ENCODE measurements at regions of chr3 and their contacts with region 1.

Region 1: GRCh38 chr3:42638339-42638842 is 15.1 kb upstream of the ZBTB47 start:
- DNase-seq: peak; percentile 66
- H3K4me3 Mint-ChIP-seq: no peak overlapping the region
- H3K27ac Mint-ChIP-seq: no peak overlapping the region
- H3K4me1 Mint-ChIP-seq: peaks cover 19% of the 10 kb centered on the region
- H3K27me3 Mint-ChIP-seq: no peaks in the 10 kb centered on the region

Region 2: DNA sequence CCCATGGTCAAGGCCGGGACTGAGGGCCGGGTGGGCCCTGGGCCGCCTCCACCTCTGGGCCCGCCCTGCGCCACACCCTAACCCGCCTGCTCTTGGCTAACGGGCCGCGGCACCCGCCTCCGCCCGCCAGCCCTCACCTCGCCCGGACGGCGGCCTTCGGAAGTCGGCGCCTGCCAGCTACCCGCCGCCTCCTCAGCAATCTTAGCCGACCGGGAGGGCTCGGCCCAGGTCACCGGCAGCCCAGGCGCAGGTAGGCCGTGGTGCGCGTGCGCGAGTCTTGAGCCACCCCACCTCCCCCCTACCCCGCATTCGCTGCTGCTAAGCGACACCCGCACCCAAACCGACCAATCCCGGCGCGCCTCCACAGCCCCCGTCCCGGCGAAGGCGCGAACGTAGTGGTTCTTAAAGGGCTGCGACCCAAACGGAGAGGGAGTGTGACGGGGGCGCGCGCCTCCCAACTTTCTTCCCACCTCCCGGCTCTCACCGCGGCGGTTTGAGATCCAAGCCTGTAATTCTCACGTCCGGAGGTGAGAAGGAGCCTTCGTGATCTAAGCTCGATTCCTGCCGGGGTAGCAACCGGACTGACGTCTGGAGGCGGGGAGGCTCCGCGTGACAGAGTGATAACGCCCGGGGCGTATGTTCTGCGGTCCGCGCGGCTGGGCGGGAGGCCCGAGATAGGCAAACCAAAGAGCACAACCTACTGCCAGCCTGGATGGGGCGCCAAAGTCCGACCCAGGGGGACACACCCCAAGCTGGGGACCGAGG is 56.5 kb before region 1 on chr3 and contains the start of gene SEC22C:
- CTCF ChIA-PET with region 1: interaction called, 17 read pairs
- POLR2A ChIA-PET with region 1: interaction called, 16 read pairs
- DNase-seq: peak; percentile 96
- H3K4me3 Mint-ChIP-seq: peak within 1 kb of the TSS; percentile 86
- H3K27ac Mint-ChIP-seq: peak within 1 kb of the TSS; percentile 87
- H3K4me1 Mint-ChIP-seq: peaks cover 63% of the 10 kb centered on the region
- H3K27me3 Mint-ChIP-seq: no peaks in the 10 kb centered on the region
- total RNA-seq, gene SEC22C: 58.8 to 62.0 TPM

Region 3: DNA sequence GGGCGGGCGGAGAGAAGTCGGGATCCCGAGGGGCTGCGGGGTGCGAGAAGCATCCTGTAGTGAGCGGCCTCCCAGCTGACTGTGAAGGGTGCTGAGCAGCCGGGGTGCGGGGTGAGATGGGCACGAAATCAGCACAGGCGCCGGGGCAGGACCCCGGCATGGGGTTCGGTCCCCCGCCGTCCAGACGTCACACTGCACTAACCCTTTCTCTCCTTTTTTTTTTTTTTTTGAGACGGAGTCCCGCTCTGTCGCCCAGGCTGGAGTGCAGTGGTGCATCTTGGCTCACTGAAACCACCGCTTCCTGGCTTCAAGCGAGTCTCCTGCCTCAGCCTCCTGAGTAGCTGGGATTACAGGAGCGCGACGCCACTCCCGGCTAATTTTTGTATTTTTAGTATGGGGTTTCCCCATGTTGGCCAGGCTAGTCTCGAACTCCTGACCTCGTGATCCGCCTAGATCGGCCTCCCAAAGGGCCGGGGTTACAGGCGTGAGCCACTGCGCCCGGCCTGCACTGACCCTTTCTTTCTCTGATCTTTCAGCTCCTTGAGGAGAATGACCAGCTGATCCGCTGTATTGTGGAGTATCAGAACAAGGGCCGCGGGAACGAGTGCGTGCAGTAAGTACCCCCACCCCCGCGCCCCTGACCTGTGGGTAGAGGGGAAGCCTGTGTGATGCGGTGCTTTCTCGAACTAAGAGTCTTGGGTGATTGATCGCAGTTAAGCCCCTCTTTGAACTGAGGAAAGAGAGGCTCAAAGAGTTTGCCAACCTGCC is 47.2 kb before region 1 on chr3:
- CTCF ChIA-PET with region 1: interaction called, 11 read pairs
- POLR2A ChIA-PET with region 1: interaction called, 4 read pairs
- DNase-seq: peak; percentile 33
- H3K4me3 Mint-ChIP-seq: peak overlapping the region; percentile 88
- H3K27ac Mint-ChIP-seq: peak overlapping the region; percentile 92
- H3K4me1 Mint-ChIP-seq: peaks cover 58% of the 10 kb centered on the region
- H3K27me3 Mint-ChIP-seq: no peaks in the 10 kb centered on the region

Region 4: DNA sequence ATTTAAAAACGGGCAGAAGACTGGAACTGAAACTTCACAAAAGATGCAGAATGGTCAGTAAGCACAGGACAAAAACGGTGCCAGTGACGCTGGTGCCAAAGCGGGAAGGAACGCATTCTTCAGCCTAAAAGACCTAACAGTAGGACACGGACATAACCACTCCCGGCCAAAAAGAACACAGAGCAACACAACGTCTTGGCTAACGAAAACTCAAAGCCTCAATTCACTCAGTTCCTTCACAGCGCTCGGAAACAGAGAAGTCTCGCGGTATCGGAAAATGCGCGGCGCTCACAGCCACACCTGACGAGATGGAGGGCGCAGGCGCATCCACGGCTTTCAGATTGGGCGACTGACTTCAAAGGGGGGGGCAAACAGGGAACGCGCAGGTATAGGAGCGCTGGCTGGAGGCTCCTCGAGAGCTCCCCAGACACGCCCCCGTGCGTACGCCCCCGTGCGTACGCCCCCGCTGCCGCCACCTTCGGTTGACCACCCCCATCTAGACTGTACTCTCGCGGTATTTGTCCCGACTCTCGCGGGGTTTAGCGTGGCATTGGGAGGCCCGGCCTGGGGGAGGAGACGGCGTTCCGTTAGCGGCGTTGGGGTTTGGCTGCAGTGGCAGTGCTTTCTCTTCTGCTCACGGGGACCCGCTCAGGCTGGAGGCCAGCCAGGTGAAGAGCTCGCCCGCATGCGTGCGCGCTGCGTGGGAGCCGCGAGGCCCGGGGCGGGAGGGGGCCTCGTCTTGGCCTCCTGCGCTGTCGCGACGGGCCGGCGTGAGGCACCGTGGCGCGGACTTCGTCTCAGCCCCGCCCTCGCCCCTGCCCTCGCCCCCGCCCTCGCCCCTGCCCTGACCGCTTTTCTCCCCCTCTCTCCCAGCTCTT is 38.0 kb before region 1 on chr3 and contains the start of gene NKTR:
- CTCF ChIA-PET with region 1: interaction called, 6 read pairs
- POLR2A ChIA-PET with region 1: interaction called, 20 read pairs
- DNase-seq: peak; percentile 100
- H3K4me3 Mint-ChIP-seq: peak within 1 kb of the TSS; percentile 84
- H3K27ac Mint-ChIP-seq: peak within 1 kb of the TSS; percentile 95
- H3K4me1 Mint-ChIP-seq: peaks cover 46% of the 10 kb centered on the region
- H3K27me3 Mint-ChIP-seq: no peaks in the 10 kb centered on the region
- total RNA-seq, gene NKTR: 97.8 to 98.9 TPM

Region 5: DNA sequence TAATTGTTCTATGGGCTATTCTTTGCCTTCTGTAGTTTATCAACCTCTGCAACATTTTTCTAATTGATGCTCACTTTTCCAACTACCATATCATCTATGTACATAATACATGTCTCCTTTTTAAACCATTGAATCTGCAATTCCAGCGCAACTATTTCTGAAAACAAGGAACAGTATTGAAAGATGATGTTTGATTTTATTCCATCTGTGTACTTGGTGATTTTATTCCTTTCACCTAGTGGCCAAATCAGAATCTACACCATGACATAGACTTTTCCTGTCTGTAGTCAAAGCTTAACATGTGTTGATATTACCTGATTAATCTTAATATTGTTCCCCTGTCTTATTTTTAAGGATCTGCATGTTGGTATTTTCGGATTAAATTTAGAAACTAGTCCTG is 24.9 kb before region 1 on chr3:
- CTCF ChIA-PET with region 1: interaction called, 11 read pairs
- POLR2A ChIA-PET with region 1: no interaction called
- DNase-seq: no peak
- H3K4me3 Mint-ChIP-seq: no peak overlapping the region
- H3K27ac Mint-ChIP-seq: peak overlapping the region; percentile 0
- H3K4me1 Mint-ChIP-seq: peaks cover 52% of the 10 kb centered on the region
- H3K27me3 Mint-ChIP-seq: no peaks in the 10 kb centered on the region

Region 6: DNA sequence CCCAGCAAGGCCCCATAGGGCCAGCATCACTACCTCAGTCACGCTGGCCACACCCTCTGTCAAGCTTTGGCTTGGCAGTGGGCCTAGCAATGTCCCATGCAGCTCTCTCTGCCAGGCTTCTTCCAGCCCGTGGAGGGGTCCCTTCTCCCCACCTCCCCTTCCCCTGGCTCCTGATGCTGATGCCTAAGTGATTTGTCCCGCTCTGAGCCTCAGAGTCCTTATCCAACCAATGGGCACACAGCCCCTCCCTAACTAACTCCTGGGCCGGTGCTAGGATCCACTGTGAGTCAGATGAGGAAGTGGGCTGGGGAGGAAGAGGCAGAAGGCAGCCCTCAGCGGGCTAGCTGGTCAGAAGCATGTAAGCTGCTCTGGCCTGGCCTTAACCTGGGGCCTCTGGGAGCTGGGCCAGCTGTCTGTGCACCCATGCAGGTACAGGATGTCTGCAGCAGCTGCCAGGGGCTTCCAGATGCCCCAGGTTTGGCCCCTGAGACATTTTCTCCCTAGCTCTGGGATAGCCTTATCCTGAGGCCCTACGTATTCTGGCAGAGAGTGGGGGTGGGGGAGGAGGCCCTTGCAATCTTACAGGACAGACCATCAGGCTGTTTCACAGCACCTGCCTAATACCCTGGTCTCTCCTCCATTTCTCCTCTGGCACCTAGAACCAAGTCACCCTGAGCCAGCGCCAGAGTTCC is 14.4 kb after region 1 on chr3:
- CTCF ChIA-PET with region 1: interaction called, 4 read pairs
- POLR2A ChIA-PET with region 1: interaction called, 12 read pairs
- DNase-seq: peak; percentile 38
- H3K4me3 Mint-ChIP-seq: peak overlapping the region; percentile 74
- H3K27ac Mint-ChIP-seq: no peak overlapping the region
- H3K4me1 Mint-ChIP-seq: peaks cover 24% of the 10 kb centered on the region
- H3K27me3 Mint-ChIP-seq: peaks cover 10% of the 10 kb centered on the region

Region 7: DNA sequence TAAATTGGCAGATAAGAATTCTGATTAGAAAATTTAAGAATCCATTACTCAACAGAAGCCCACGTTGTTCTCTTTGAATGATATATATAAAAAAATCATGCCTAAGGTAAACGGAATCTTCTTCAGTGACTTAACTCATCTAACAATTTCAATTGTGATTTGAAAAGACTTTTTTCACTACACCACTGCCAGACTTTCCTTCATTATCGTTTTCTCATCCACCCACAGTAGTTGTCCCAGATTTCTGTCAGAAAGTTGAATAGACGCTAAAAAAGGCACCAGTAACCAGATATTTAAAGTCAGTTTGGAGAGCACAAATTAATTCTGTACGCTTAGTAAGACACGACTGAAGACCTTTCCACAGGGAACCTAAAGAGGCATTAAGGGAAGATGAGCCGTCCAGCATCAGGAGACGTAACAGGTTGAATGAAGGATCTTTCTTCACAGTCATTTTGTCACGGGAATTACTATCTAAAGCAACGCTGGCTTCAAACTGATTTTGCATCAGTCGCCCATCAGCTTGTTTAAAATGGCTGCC is 164.6 kb after region 1 on chr3:
- CTCF ChIA-PET with region 1: no interaction called
- POLR2A ChIA-PET with region 1: no interaction called
- DNase-seq: no peak
- H3K4me3 Mint-ChIP-seq: peak overlapping the region; percentile 98
- H3K27ac Mint-ChIP-seq: peak overlapping the region; percentile 45
- H3K4me1 Mint-ChIP-seq: peaks cover 44% of the 10 kb centered on the region
- H3K27me3 Mint-ChIP-seq: peaks cover 14% of the 10 kb centered on the region

Measured in activated CD4-positive, alpha-beta memory T cell treated with anti-CD3 and anti-CD28 coated beads, Interleukin-2, amount 10 ng/mL, durations not matched to agents 7 days and 5 days (primary cell).